Uterus (tissue), 4 donors: ENCODE measurements at regions of chr7 and their contacts with region 1.

Region 1: GRCh38 chr7:37027557-37028341 is 303.5 kb upstream of the AOAH start:
- DNase-seq: no peak
- H3K4me3 ChIP-seq: no peak overlapping the region
- H3K27ac ChIP-seq: no peak overlapping the region
- H3K4me1 ChIP-seq: peaks cover 0 to 13% of the 10 kb centered on the region in 2 donors
- H3K27me3 ChIP-seq: no peaks in the 10 kb centered on the region
- CTCF ChIP-seq: no peak
- POLR2A ChIP-seq: no peak

Region 2: DNA sequence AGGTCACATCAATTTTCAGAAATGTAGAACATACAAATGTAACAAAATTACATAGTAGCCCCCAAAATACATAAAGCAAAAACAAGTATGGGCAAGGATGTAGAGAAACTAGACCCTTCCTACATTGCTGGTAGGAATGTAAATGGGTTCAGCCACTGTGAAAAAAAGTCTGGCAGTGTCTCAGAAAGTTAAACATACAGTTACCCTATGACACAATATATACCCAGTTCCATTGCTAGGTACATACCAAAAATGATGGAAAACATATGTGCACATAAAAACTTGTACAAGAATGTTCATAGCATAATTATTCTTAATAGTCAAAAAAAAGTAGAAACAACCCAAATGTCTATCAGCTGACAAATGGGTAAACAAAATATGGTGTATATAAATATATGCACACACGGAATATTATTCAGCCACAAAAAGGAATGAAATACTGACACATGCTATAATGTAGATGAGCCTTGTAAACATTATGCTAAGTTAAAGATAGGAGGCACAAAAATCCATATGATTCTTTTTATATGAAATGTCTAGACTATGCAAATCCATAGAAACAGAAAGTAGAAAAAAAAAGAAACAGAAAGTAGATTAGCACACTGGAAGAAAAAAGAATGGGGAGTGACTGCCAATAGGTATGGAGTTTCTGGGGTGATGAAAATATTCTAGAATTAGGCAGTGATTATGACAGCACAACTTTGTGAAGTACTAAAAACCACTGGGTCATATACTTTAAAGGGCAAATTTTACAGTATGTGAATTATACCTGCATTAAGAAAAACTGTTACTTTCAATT is 1346.3 kb before region 1 on chr7:
- intact Hi-C with region 1: loop called (anchors 5 kb)
- DNase-seq: no peak
- H3K4me3 ChIP-seq: no peak overlapping the region
- H3K27ac ChIP-seq: no peak overlapping the region
- H3K4me1 ChIP-seq: peaks cover 0 to 16% of the 10 kb centered on the region in 2 donors
- H3K27me3 ChIP-seq: no peaks in the 10 kb centered on the region
- CTCF ChIP-seq: no peak
- POLR2A ChIP-seq: no peak